Endothelial cell of umbilical vein (primary cell): ENCODE measurements at regions of chr2 and their contacts with region 1.

Region 1: DNA sequence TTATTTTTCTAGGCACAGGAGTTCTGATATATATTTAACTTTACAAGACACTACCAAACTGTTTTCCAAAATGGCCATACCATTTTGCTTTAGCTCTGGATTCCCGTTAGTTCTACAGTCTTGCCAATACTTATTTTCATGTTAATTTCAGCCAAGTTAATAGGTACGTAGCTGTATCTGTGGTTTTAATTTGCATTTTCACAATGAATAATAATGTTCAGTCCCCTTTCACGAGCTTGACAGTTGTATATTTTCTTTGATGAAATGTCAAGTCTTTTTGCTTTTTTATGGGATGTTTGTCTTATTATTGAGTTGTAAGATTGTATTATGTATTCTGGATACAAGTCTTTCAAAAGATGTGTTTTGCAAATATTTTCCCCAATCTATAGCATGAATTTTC is 50.6 kb upstream of the GALNT5 start:
- DNase-seq: no peak
- H3K4me3 ChIP-seq: no peak overlapping the region
- H3K27ac ChIP-seq: no peak overlapping the region
- H3K4me1 ChIP-seq: no peaks in the 10 kb centered on the region
- H3K27me3 ChIP-seq: no peaks in the 10 kb centered on the region
- CTCF ChIP-seq: no peak
- POLR2A ChIP-seq: no peak

Region 2: GRCh38 chr2:156046900-156047299 is 1160.0 kb before region 1 on chr2:
- CTCF ChIA-PET with region 1: no interaction called
- POLR2A ChIA-PET with region 1: no interaction called
- dilution Hi-C with region 1: no loop called
- intact Hi-C with region 1: loop called (anchors 5 kb)
- DNase-seq: no peak
- H3K4me3 ChIP-seq: no peak overlapping the region
- H3K27ac ChIP-seq: no peak overlapping the region
- H3K4me1 ChIP-seq: no peaks in the 10 kb centered on the region
- H3K27me3 ChIP-seq: no peaks in the 10 kb centered on the region
- CTCF ChIP-seq: no peak
- POLR2A ChIP-seq: no peak